Esophagus muscularis mucosa (tissue), 4 donors: ENCODE measurements at regions of chr5 and their contacts with region 1.

Region 1: GRCh38 chr5:116947691-116948528 is 373.3 kb upstream of the SEMA6A start:
- DNase-seq: no peak
- H3K4me3 ChIP-seq: no peak overlapping the region
- H3K27ac ChIP-seq: no peak overlapping the region
- H3K4me1 ChIP-seq: no peaks in the 10 kb centered on the region
- H3K27me3 ChIP-seq: no peaks in the 10 kb centered on the region
- CTCF ChIP-seq: peak; percentile 41 to 66 (median 65)
- EP300 ChIP-seq: no peak
- POLR2A ChIP-seq: no peak

Region 2: DNA sequence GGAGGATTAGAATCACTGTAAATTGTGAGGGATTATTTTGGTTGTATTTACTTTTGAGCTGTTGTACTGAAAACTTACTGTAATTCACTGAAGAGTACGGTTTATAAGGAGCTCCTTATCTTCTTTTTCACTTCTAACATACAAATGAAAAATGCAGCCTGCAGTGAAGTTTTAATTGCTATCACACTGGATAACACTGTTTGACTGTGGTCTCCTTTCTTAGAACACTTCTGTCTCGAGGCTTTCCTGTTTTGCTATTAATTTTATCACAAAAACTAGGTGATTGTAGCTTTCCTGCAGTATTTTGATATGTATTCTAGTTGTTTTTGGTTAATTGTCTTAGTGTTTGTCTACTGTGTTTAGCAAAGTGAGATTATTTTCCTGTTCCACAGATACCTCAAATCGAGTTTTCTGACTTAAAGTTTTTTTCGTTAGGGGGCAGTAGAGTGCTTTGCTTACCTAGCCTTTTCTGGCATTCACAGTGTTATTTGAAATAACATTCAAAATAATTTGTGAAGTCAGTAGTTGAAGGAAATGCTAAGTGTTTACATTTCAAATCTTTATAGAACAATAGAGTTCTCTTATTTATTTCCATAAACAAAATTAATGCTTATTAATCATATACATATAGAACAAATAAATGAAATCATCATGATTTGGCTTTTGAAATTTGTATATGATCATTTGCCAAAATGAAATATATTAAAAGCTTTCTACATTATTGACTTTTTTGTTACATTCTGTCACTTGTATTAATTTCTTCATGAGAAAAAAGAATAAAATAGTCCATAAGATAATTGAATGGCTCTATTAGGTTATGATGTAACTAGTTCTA is 810.1 kb before region 1 on chr5:
- intact Hi-C with region 1: loop called (anchors 10 kb)
- DNase-seq: no peak
- H3K4me3 ChIP-seq: no peak overlapping the region
- H3K27ac ChIP-seq: no peak overlapping the region
- H3K4me1 ChIP-seq: peaks cover 0 to 8% (median 0%) of the 10 kb centered on the region in 4 donors
- H3K27me3 ChIP-seq: no peaks in the 10 kb centered on the region
- CTCF ChIP-seq: peak; percentile 56 to 75 (median 70)
- EP300 ChIP-seq: no peak
- POLR2A ChIP-seq: no peak